Body of pancreas (tissue), 4 donors: ENCODE measurements at regions of chr1 and their contacts with region 1.

Region 1: GRCh38 chr1:32939655-32940371 is 24.8 kb downstream of the RNF19B start:
- DNase-seq: peak in 2 of 4 donors; percentile 21 to 60
- ATAC-seq: peak; percentile 55
- H3K4me3 ChIP-seq: no peak overlapping the region
- H3K27ac ChIP-seq: no peak overlapping the region
- H3K4me1 ChIP-seq: peaks cover 10% of the 10 kb centered on the region
- H3K27me3 ChIP-seq: no peaks in the 10 kb centered on the region
- CTCF ChIP-seq: no peak
- POLR2A ChIP-seq: no peak

Region 2: DNA sequence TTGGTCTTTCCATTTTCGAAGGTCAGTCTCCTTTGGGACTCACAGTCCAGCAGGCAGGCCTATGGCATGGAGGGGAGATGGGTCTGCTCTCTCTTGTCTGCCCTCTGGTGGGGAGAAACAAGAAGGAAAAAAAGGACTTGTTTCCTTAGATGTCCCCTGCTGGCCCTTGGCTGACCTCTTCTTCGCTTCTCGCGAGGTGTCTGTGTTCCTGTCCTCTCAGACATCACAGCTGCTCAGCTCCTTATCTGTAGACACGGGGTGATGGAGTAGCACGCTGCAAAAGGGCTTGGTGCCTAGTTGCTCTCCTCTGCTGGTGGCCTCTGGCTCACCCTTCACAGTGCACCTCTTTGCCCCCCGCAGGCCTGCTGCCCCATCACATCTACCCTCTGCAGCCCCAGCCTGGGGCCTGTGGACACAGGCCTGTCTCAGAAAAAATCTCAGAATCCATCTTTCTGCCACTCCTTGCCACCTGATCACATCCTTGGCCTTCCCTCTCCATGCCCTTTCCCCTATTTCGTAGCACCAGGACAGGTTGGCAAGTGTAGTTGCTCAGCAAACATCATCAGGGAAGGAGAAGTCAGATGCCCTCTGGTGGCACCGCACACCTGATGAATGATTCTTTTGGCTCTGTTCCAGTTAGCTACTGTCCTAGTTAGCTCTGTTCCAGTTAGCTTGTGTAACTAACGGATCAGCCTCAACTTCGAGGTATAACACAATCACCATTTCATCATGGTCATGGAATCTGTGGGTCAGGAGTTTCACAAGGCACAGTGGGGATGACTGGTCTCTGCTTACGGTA is 115.6 kb after region 1 on chr1:
- intact Hi-C with region 1: loop called (anchors 5 kb)
- DNase-seq: peak; percentile 62 to 85 (median 72)
- ATAC-seq: peak; percentile 87
- H3K4me3 ChIP-seq: no peak overlapping the region
- H3K27ac ChIP-seq: no peak overlapping the region
- H3K4me1 ChIP-seq: peaks cover 7% of the 10 kb centered on the region
- H3K27me3 ChIP-seq: no peaks in the 10 kb centered on the region
- CTCF ChIP-seq: peak; percentile 37 to 83 (median 80)
- POLR2A ChIP-seq: no peak